CD8-positive, alpha-beta T cell (primary cell): ENCODE measurements at regions of chr12 and their contacts with region 1.

Region 1: GRCh38 chr12:92034858-92035401 is 110.7 kb downstream of the BTG1 start:
- DNase-seq: peak; percentile 12 to 84 (median 63)
- ATAC-seq: peak; percentile 57
- H3K4me3 ChIP-seq: peak overlapping the region; percentile 38 to 41
- H3K4me3 Mint-ChIP-seq: peak overlapping the region; percentile 86
- H3K27ac ChIP-seq: peak overlapping the region; percentile 61 to 83
- H3K27ac Mint-ChIP-seq: peak overlapping the region; percentile 98
- H3K4me1 ChIP-seq: peaks cover 84% of the 10 kb centered on the region
- H3K4me1 Mint-ChIP-seq: peaks cover 96% of the 10 kb centered on the region
- H3K27me3 ChIP-seq: no peaks in the 10 kb centered on the region
- H3K27me3 Mint-ChIP-seq: no peaks in the 10 kb centered on the region
- CTCF ChIP-seq: no peak

Region 2: GRCh38 chr12:91732086-91732485 is 302.8 kb before region 1 on chr12:
- CTCF ChIA-PET with region 1: no interaction called
- POLR2A ChIA-PET with region 1: no interaction called
- intact Hi-C with region 1: no loop called
- DNase-seq: no peak
- ATAC-seq: no peak
- H3K4me3 ChIP-seq: no peak overlapping the region
- H3K4me3 Mint-ChIP-seq: no peak overlapping the region
- H3K27ac ChIP-seq: no peak overlapping the region
- H3K27ac Mint-ChIP-seq: no peak overlapping the region
- H3K4me1 ChIP-seq: no peaks in the 10 kb centered on the region
- H3K4me1 Mint-ChIP-seq: no peaks in the 10 kb centered on the region
- H3K27me3 ChIP-seq: no peaks in the 10 kb centered on the region
- H3K27me3 Mint-ChIP-seq: no peaks in the 10 kb centered on the region
- CTCF ChIP-seq: no peak

Region 3: GRCh38 chr12:91792597-91792996 is 242.3 kb before region 1 on chr12:
- CTCF ChIA-PET with region 1: no interaction called
- POLR2A ChIA-PET with region 1: no interaction called
- intact Hi-C with region 1: no loop called
- DNase-seq: no peak
- ATAC-seq: no peak
- H3K4me3 ChIP-seq: no peak overlapping the region
- H3K4me3 Mint-ChIP-seq: no peak overlapping the region
- H3K27ac ChIP-seq: no peak overlapping the region
- H3K27ac Mint-ChIP-seq: no peak overlapping the region
- H3K4me1 ChIP-seq: peaks cover 6% of the 10 kb centered on the region
- H3K4me1 Mint-ChIP-seq: peaks cover 15% of the 10 kb centered on the region
- H3K27me3 ChIP-seq: no peaks in the 10 kb centered on the region
- H3K27me3 Mint-ChIP-seq: no peaks in the 10 kb centered on the region
- CTCF ChIP-seq: no peak

Region 4: DNA sequence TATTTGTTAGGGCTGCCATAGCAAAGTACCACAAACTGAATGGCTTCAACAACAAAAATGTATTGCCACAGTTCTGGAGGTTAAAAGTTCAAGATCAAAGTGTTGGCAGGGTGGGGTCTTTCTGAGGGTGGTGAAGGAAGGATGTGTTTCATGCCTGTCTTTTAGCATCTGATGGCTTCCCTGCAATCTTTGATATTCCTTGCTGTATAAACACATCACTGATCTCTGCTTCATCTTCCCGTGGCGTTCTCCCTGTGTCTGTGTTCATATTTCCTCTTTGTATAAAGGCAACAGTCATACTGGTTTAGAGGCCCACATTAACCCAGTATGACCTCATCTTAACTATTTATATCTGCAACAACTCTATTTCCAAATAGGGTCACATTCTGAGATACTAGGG is 56.8 kb before region 1 on chr12:
- CTCF ChIA-PET with region 1: no interaction called
- POLR2A ChIA-PET with region 1: no interaction called
- intact Hi-C with region 1: loop called in 1 of 2 experiments (anchors 2 kb)
- DNase-seq: peak in 8 of 9 experiments; percentile 7 to 87 (median 48)
- ATAC-seq: peak; percentile 85
- H3K4me3 ChIP-seq: no peak overlapping the region
- H3K4me3 Mint-ChIP-seq: peak overlapping the region; percentile 2
- H3K27ac ChIP-seq: peak overlapping the region; percentile 40 to 49
- H3K27ac Mint-ChIP-seq: peak overlapping the region; percentile 74
- H3K4me1 ChIP-seq: peaks cover 22% of the 10 kb centered on the region
- H3K4me1 Mint-ChIP-seq: peaks cover 60% of the 10 kb centered on the region
- H3K27me3 ChIP-seq: no peaks in the 10 kb centered on the region
- H3K27me3 Mint-ChIP-seq: no peaks in the 10 kb centered on the region
- CTCF ChIP-seq: no peak

Region 5: DNA sequence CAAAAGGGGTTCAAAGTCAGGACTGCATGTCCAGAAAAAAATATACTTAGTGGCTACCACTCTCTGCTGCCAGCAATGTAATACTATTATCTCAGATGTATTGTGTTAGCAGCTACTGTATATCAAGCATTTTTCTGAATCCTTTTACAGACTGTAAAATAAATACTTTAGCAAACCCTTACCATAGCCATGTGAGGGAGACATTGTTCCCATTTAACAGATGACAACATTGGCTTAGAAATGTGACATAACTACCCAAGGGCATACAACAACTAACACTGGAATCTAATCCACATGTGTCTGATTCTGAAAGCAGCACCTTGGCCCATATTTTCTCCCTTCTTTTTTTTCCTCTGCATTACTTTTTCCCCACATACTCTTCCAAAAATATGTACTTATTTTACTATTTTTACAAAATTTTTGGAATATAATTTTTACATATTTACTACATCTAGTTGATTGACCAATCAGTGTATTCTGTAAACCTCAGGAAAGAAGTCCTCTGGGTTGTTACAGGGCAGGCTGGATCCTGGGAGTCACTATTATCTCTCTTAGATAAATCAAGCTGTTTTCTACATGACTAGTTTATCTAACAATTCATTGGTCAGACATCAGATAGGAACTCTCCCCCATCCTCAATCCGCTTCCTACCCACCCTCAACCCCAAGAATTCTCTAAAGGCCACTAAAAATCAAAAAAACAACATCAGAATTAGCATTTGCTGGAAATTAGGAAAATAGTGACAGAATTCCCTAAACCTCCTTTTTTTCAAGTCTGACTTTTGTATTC is 43.3 kb before region 1 on chr12:
- CTCF ChIA-PET with region 1: interaction called, 3 read pairs
- POLR2A ChIA-PET with region 1: interaction called, 4 read pairs
- intact Hi-C with region 1: loop called (anchors 5 kb)
- DNase-seq: peak in 2 of 9 experiments; percentile 61 to 77
- ATAC-seq: peak; percentile 71
- H3K4me3 ChIP-seq: no peak overlapping the region
- H3K4me3 Mint-ChIP-seq: no peak overlapping the region
- H3K27ac ChIP-seq: no peak overlapping the region
- H3K27ac Mint-ChIP-seq: peak overlapping the region; percentile 66
- H3K4me1 ChIP-seq: peaks cover 25% of the 10 kb centered on the region
- H3K4me1 Mint-ChIP-seq: peaks cover 65% of the 10 kb centered on the region
- H3K27me3 ChIP-seq: no peaks in the 10 kb centered on the region
- H3K27me3 Mint-ChIP-seq: no peaks in the 10 kb centered on the region
- CTCF ChIP-seq: peak; percentile 28

Region 6: GRCh38 chr12:92046557-92047392 is 11.8 kb after region 1 on chr12:
- CTCF ChIA-PET with region 1: interaction called, 4 read pairs
- POLR2A ChIA-PET with region 1: interaction called, 15 read pairs
- intact Hi-C with region 1: loop called in 1 of 2 experiments (anchors 1 kb)
- DNase-seq: no peak
- ATAC-seq: peak; percentile 25
- H3K4me3 ChIP-seq: peak overlapping the region in 1 of 2 experiments; percentile 10
- H3K4me3 Mint-ChIP-seq: peak overlapping the region; percentile 71
- H3K27ac ChIP-seq: no peak overlapping the region
- H3K27ac Mint-ChIP-seq: peak overlapping the region; percentile 85
- H3K4me1 ChIP-seq: peaks cover 28% of the 10 kb centered on the region
- H3K4me1 Mint-ChIP-seq: peaks cover 67% of the 10 kb centered on the region
- H3K27me3 ChIP-seq: no peaks in the 10 kb centered on the region
- H3K27me3 Mint-ChIP-seq: no peaks in the 10 kb centered on the region
- CTCF ChIP-seq: no peak

Region 7: GRCh38 chr12:92136965-92137721 is 102.2 kb after region 1 on chr12:
- CTCF ChIA-PET with region 1: interaction called, 5 read pairs
- POLR2A ChIA-PET with region 1: interaction called, 150 read pairs
- intact Hi-C with region 1: loop called (anchors 2 to 5 kb)
- DNase-seq: peak in 1 of 9 experiments; percentile 43
- ATAC-seq: no peak
- H3K4me3 ChIP-seq: peak overlapping the region; percentile 66 to 91
- H3K4me3 Mint-ChIP-seq: peak overlapping the region; percentile 96
- H3K27ac ChIP-seq: peak overlapping the region; percentile 45 to 92
- H3K27ac Mint-ChIP-seq: peak overlapping the region; percentile 99
- H3K4me1 ChIP-seq: peaks cover 47% of the 10 kb centered on the region
- H3K4me1 Mint-ChIP-seq: peaks cover 51% of the 10 kb centered on the region
- H3K27me3 ChIP-seq: no peaks in the 10 kb centered on the region
- H3K27me3 Mint-ChIP-seq: no peaks in the 10 kb centered on the region
- CTCF ChIP-seq: no peak

Region 8: DNA sequence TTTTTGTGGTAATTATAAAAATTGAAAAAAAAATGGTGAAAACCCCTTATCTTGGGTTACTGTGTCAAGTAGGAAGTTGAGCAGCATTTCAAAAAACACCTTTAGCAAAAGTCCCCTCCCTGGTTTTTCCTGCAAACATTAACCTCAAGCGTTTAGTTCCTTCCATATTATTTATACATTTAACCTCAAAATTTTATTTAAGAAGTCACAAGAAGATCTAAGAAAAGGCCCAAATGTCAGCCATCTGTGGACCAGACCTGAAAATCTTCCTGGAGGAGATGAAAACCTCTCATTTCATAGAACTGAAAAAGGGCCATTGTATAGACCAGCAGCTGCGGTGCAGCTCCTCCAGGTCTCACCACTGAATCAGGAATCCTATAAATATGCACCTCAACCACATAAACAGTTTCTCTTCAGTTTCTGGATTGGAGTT is 151.1 kb after region 1 on chr12:
- CTCF ChIA-PET with region 1: no interaction called
- POLR2A ChIA-PET with region 1: no interaction called
- intact Hi-C with region 1: no loop called
- DNase-seq: peak in 2 of 9 experiments; percentile 50 to 74
- ATAC-seq: peak; percentile 34
- H3K4me3 ChIP-seq: peak overlapping the region in 1 of 2 experiments; percentile 6
- H3K4me3 Mint-ChIP-seq: peak overlapping the region; percentile 65
- H3K27ac ChIP-seq: peak overlapping the region; percentile 12 to 43
- H3K27ac Mint-ChIP-seq: peak overlapping the region; percentile 92
- H3K4me1 ChIP-seq: peaks cover 24% of the 10 kb centered on the region
- H3K4me1 Mint-ChIP-seq: peaks cover 45% of the 10 kb centered on the region
- H3K27me3 ChIP-seq: no peaks in the 10 kb centered on the region
- H3K27me3 Mint-ChIP-seq: no peaks in the 10 kb centered on the region
- CTCF ChIP-seq: no peak

Region 9: GRCh38 chr12:92593734-92594402 is 558.9 kb after region 1 on chr12:
- CTCF ChIA-PET with region 1: no interaction called
- POLR2A ChIA-PET with region 1: no interaction called
- intact Hi-C with region 1: loop called in 1 of 2 experiments (anchors 10 kb)
- DNase-seq: peak; percentile 66 to 98 (median 77)
- ATAC-seq: peak; percentile 85
- H3K4me3 ChIP-seq: no peak overlapping the region
- H3K4me3 Mint-ChIP-seq: peak overlapping the region; percentile 44
- H3K27ac ChIP-seq: peak overlapping the region; percentile 73 to 99
- H3K27ac Mint-ChIP-seq: peak overlapping the region; percentile 98
- H3K4me1 ChIP-seq: peaks cover 26% of the 10 kb centered on the region
- H3K4me1 Mint-ChIP-seq: peaks cover 39% of the 10 kb centered on the region
- H3K27me3 ChIP-seq: no peaks in the 10 kb centered on the region
- H3K27me3 Mint-ChIP-seq: no peaks in the 10 kb centered on the region
- CTCF ChIP-seq: no peak